Ascending aorta (tissue), 2 donors: ENCODE measurements at regions of chr1 and their contacts with region 1.

Region 1: DNA sequence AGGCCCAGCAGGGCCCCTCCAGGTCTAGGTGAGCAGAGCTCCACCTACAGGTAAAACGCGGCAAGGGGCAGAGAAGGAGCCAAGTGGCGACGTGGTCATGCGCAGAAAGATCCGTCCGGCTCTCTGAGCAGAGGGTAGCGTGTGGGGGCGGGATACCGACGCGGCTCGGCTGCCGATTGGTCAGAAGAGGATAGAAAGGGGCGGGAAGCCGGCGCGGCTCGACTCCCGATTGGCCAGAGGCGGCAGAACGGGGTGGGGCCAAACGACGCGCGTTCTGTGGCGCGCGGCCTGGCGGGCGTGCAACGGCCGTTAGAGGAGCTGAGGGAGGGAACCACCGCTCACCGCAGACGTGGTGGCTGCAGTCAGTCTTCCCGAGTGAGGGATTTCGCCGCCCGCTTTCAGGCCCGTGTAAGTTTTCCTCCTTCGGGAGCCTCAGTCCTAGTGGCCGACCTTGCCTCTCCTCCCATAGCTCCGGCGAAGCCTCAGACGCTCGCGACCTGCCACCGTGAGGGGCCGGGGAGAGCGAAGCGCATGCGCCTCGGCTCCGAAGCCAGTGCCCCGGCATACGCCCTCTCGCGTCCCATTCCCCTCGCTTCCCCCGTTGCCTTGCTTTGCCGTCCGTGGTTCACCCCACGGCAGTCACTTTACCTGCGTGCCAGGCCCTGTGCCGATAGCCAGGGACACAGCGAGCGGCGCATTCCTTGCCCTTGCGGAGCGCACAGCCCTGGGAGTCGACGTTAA is at the start of gene CEP85:
- DNase-seq: peak; percentile 83 to 98
- H3K4me3 ChIP-seq: peak within 1 kb of the TSS; percentile 73 to 87
- H3K27ac ChIP-seq: peak within 1 kb of the TSS; percentile 76 to 84
- H3K4me1 ChIP-seq: no peaks in the 10 kb centered on the region
- H3K27me3 ChIP-seq: no peaks in the 10 kb centered on the region
- CTCF ChIP-seq: peak; percentile 63 to 81 (median 63)
- total RNA-seq, gene CEP85: 5.0 TPM

Region 2: GRCh38 chr1:25904943-25905679 is 329.0 kb before region 1 on chr1:
- intact Hi-C with region 1: loop called (anchors 10 kb)
- DNase-seq: peak; percentile 81 to 97
- H3K4me3 ChIP-seq: peak overlapping the region; percentile 74 to 90
- H3K27ac ChIP-seq: peak overlapping the region; percentile 32 to 65
- H3K4me1 ChIP-seq: peaks cover 0 to 13% of the 10 kb centered on the region in 2 donors
- H3K27me3 ChIP-seq: no peaks in the 10 kb centered on the region
- CTCF ChIP-seq: no peak

Region 3: GRCh38 chr1:26111530-26112406 is 122.3 kb before region 1 on chr1 and contains the start of gene PDIK1L:
- intact Hi-C with region 1: loop called (anchors 2 kb)
- DNase-seq: peak; percentile 61 to 95
- H3K4me3 ChIP-seq: peak within 1 kb of the TSS; percentile 92 to 100
- H3K27ac ChIP-seq: peak within 1 kb of the TSS; percentile 89 to 90
- H3K4me1 ChIP-seq: peaks cover 0 to 16% of the 10 kb centered on the region in 2 donors
- H3K27me3 ChIP-seq: no peaks in the 10 kb centered on the region
- CTCF ChIP-seq: no peak
- total RNA-seq, gene PDIK1L: 4.0 TPM

Region 4: GRCh38 chr1:26169669-26170471 is 64.2 kb before region 1 on chr1 and contains the start of gene ZNF593:
- intact Hi-C with region 1: loop called (anchors 1 kb)
- DNase-seq: peak; percentile 35 to 96
- H3K4me3 ChIP-seq: peak within 1 kb of the TSS; percentile 63 to 90
- H3K27ac ChIP-seq: peak within 1 kb of the TSS; percentile 41 to 54
- H3K4me1 ChIP-seq: peaks cover 0 to 6% of the 10 kb centered on the region in 2 donors
- H3K27me3 ChIP-seq: no peaks in the 10 kb centered on the region
- CTCF ChIP-seq: peak; percentile 91 to 96 (median 93)
- total RNA-seq, gene ZNF593: 90.0 TPM

Region 5: GRCh38 chr1:26191739-26192138 is 42.3 kb before region 1 on chr1:
- intact Hi-C with region 1: no loop called
- DNase-seq: no peak
- H3K4me3 ChIP-seq: no peak overlapping the region
- H3K27ac ChIP-seq: no peak overlapping the region
- H3K4me1 ChIP-seq: no peaks in the 10 kb centered on the region
- H3K27me3 ChIP-seq: no peaks in the 10 kb centered on the region
- CTCF ChIP-seq: no peak

Region 6: DNA sequence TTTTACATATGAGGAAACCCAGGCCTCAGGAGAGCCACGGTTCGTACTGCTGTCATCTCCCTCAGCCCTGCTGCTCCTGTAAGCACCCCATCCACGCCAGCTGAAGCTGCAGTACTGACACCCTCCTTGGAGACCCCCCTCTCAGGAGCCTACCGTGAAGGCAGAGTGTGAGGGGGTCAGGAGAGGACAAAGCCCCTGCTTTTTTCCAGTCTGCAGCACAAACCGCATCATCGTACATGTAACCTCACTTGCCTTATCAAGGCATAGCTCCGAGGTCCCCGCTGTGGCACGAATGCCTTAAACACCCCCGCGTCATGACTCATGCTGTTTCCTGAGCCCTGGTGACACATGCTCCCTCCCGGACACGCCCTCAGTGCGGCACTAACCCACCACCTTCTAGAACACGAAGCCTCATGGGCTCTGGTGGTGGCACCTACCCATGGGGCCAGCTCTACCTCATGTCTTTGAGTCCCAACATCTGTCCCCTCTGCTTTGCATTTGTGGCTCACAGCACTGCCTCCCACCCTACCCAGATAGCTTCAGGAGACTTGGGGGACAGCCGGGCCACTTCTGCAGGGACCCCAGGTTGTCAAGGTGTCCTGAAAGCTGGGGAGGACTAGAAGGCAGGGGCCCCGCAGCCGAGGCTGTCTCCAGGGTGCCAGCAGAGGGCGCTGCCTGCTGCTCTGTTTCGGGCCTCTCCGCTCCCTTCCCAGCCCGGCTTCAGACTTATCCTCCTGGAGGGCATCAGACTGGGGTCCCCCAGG is 50.7 kb after region 1 on chr1:
- intact Hi-C with region 1: loop called (anchors 2 kb)
- DNase-seq: peak; percentile 77 to 96
- H3K4me3 ChIP-seq: no peak overlapping the region
- H3K27ac ChIP-seq: peak overlapping the region; percentile 61 to 69
- H3K4me1 ChIP-seq: peaks cover 13 to 29% of the 10 kb centered on the region in 2 donors
- H3K27me3 ChIP-seq: no peaks in the 10 kb centered on the region
- CTCF ChIP-seq: peak in 2 of 3 experiments; percentile 27 to 50

Region 7: DNA sequence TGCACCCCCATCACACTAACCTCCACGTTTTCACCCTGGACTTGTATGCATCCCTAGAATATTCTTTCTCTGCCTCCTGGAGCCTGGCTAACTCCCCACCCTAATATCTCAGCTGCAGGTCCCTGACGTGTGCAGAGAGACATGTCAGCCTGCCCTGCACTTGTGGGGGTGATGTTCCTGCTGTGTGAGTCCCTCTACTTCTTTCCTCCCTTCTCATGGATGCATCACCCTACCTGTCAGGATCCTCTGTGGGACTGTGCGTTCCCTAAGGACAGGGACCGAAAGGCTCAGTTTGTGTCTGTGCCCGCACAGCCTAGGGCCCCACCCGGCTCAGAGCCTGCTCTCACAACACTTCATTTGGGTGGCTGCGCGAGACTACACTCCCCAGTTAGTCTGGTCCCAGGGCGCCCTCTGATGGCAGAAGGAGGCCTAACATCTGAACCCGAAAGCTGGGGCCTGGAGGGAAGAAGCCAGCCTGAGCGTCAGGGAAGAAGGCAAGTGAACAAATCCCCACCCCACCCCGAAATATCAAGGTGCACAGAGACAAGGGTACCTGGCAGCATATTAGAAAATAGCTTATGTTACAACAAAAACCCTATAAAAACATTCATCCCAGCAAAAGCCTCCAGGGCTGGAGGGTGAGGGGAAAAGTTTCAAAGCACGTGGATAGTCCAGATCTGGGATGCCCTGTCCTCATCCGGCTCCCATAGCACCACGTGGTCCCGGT is 87.4 kb after region 1 on chr1:
- intact Hi-C with region 1: loop called (anchors 5 kb)
- DNase-seq: peak; percentile 69 to 97
- H3K4me3 ChIP-seq: no peak overlapping the region
- H3K27ac ChIP-seq: no peak overlapping the region
- H3K4me1 ChIP-seq: peaks cover 0 to 3% of the 10 kb centered on the region in 2 donors
- H3K27me3 ChIP-seq: no peaks in the 10 kb centered on the region
- CTCF ChIP-seq: peak; percentile 86 to 95 (median 90)

Region 8: DNA sequence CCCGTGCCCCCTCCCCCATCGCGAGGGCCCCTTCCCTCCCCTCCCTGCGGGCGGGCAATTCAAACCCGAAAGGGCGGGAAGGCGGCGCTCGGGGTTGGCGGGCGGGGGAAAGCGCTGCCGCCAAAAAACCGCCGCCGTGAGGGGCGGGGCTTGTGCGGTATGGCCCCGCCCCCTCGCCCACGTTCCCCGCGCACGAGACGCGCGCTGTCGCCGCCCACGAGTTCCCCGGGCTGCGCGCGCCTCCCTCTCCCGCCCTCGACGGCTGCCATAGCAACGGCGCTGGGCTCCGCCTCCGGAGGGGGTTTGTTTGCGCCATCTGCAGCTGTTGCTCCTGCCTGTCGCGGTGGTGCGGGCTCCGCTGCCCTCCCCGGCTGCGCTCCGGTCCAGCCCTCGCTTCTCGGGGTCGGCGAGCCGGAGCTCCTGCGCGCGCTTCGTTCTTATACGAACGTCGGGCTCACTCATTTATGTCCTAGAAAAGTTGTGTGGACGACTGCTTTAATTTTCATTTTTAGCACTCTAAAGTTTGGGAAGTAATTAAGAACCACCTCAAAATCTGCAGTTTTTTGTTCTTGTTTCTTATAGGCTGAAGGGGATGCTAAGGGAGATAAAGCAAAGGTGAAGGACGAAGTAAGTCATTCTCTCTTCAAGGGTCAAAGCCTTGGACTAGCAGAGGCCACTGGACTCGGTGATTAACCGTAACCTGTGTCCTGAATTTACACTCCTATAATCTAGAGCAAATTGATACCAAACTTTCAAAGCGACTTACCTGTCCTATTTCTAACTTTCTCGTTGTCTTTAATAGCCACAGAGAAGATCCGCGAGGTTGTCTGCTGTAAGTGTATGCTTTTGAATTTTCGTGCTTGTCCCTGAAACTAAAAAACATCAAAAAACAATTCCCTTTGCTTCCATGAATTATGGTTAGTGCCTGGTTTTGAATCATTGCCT is 239.1 kb after region 1 on chr1:
- intact Hi-C with region 1: loop called (anchors 5 kb)
- DNase-seq: peak; percentile 80 to 97
- H3K4me3 ChIP-seq: peak overlapping the region; percentile 72 to 90
- H3K27ac ChIP-seq: peak overlapping the region; percentile 94 to 100
- H3K4me1 ChIP-seq: peaks cover 5 to 22% of the 10 kb centered on the region in 2 donors
- H3K27me3 ChIP-seq: no peaks in the 10 kb centered on the region
- CTCF ChIP-seq: no peak